B cell (primary cell): ENCODE measurements at regions of chr17 and their contacts with region 1.

Region 1: GRCh38 chr17:27236717-27237315 is 57.1 kb upstream of the WSB1 start:
- DNase-seq: peak; percentile 81
- ATAC-seq: peak; percentile 78
- H3K4me3 ChIP-seq: no peak overlapping the region
- H3K4me3 Mint-ChIP-seq: no peak overlapping the region
- H3K27ac ChIP-seq: no peak overlapping the region
- H3K27ac Mint-ChIP-seq: no peak overlapping the region
- H3K4me1 ChIP-seq: peaks cover 11 to 22% of the 10 kb centered on the region in 2 donors
- H3K4me1 Mint-ChIP-seq: peaks cover 34% of the 10 kb centered on the region
- H3K27me3 ChIP-seq: no peaks in the 10 kb centered on the region
- H3K27me3 Mint-ChIP-seq: no peaks in the 10 kb centered on the region
- CTCF ChIP-seq: peak; percentile 99

Region 2: GRCh38 chr17:27066315-27066714 is 170.5 kb before region 1 on chr17:
- CTCF ChIA-PET with region 1: no interaction called
- POLR2A ChIA-PET with region 1: no interaction called
- intact Hi-C with region 1: no loop called
- DNase-seq: no peak
- ATAC-seq: no peak
- H3K4me3 ChIP-seq: no peak overlapping the region
- H3K4me3 Mint-ChIP-seq: no peak overlapping the region
- H3K27ac ChIP-seq: no peak overlapping the region
- H3K27ac Mint-ChIP-seq: no peak overlapping the region
- H3K4me1 ChIP-seq: no peaks in the 10 kb centered on the region
- H3K4me1 Mint-ChIP-seq: no peaks in the 10 kb centered on the region
- H3K27me3 ChIP-seq: no peaks in the 10 kb centered on the region
- H3K27me3 Mint-ChIP-seq: peaks cover 50% of the 10 kb centered on the region
- CTCF ChIP-seq: no peak

Region 3: GRCh38 chr17:27199948-27200347 is 36.9 kb before region 1 on chr17:
- CTCF ChIA-PET with region 1: interaction called, 53 read pairs
- POLR2A ChIA-PET with region 1: no interaction called
- intact Hi-C with region 1: loop called (anchors 5 kb)
- DNase-seq: no peak
- ATAC-seq: no peak
- H3K4me3 ChIP-seq: no peak overlapping the region
- H3K4me3 Mint-ChIP-seq: no peak overlapping the region
- H3K27ac ChIP-seq: no peak overlapping the region
- H3K27ac Mint-ChIP-seq: no peak overlapping the region
- H3K4me1 ChIP-seq: no peaks in the 10 kb centered on the region
- H3K4me1 Mint-ChIP-seq: peaks cover 2% of the 10 kb centered on the region
- H3K27me3 ChIP-seq: no peaks in the 10 kb centered on the region
- H3K27me3 Mint-ChIP-seq: no peaks in the 10 kb centered on the region
- CTCF ChIP-seq: no peak

Region 4: GRCh38 chr17:27226615-27227230 is 10.1 kb before region 1 on chr17:
- CTCF ChIA-PET with region 1: interaction called, 36 read pairs
- POLR2A ChIA-PET with region 1: no interaction called
- intact Hi-C with region 1: no loop called
- DNase-seq: no peak
- ATAC-seq: no peak
- H3K4me3 ChIP-seq: no peak overlapping the region
- H3K4me3 Mint-ChIP-seq: no peak overlapping the region
- H3K27ac ChIP-seq: no peak overlapping the region
- H3K27ac Mint-ChIP-seq: no peak overlapping the region
- H3K4me1 ChIP-seq: no peaks in the 10 kb centered on the region
- H3K4me1 Mint-ChIP-seq: no peaks in the 10 kb centered on the region
- H3K27me3 ChIP-seq: no peaks in the 10 kb centered on the region
- H3K27me3 Mint-ChIP-seq: no peaks in the 10 kb centered on the region
- CTCF ChIP-seq: no peak

Region 5: GRCh38 chr17:27332485-27333409 is 95.9 kb after region 1 on chr17:
- CTCF ChIA-PET with region 1: interaction called, 140 read pairs
- POLR2A ChIA-PET with region 1: interaction called, 6 read pairs
- intact Hi-C with region 1: loop called (anchors 1 kb)
- DNase-seq: peak; percentile 92
- ATAC-seq: peak; percentile 83
- H3K4me3 ChIP-seq: peak overlapping the region; percentile 23 to 63 (median 55)
- H3K4me3 Mint-ChIP-seq: peak overlapping the region; percentile 85
- H3K27ac ChIP-seq: peak overlapping the region; percentile 38 to 59
- H3K27ac Mint-ChIP-seq: peak overlapping the region; percentile 92
- H3K4me1 ChIP-seq: peaks cover 11 to 13% of the 10 kb centered on the region in 2 donors
- H3K4me1 Mint-ChIP-seq: peaks cover 40% of the 10 kb centered on the region
- H3K27me3 ChIP-seq: no peaks in the 10 kb centered on the region
- H3K27me3 Mint-ChIP-seq: no peaks in the 10 kb centered on the region
- CTCF ChIP-seq: peak; percentile 80

Region 6: DNA sequence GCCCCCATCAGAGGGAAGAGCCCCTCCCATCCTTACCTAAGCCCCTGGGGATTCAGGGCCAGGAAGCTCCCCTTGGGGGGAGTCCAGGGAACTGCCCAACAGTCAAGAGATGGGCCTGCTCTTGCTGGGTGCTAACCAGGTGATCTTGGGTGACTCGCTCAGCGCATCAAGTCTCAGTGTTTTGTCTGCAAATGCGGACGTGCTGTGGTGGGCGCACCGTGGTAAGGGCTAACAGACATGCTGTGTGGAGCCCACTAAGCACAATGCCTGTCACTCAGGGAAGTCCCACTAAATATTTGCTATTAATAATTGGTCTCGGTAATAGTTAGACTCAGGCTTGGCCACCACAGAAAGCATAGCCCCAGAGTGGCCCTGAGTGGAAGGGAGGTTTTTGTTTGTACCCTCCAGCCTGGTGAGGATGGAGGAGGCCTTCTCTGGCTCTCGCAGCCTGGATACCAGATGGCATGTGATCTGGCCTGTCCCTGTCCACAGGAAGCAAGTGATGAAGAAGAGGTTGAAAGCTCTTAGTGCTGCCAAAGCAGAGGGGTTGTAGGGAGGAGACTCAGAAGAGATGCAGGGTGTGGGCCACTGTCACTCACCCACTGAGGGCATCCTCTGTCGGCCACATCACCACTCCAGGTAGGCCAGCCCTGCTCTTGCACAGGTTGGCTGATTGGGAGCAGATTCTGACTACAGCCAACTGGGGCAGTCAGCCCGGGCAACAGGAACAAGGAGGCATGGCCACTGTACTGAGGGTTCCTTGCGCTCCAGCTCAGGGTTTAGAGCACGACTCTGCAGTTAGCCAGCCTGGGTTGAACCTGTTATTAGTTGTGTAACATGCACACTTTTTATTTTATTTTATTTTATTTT is 149.6 kb after region 1 on chr17:
- CTCF ChIA-PET with region 1: interaction called, 52 read pairs
- POLR2A ChIA-PET with region 1: no interaction called
- intact Hi-C with region 1: loop called (anchors 1 kb)
- DNase-seq: no peak
- ATAC-seq: no peak
- H3K4me3 ChIP-seq: no peak overlapping the region
- H3K4me3 Mint-ChIP-seq: no peak overlapping the region
- H3K27ac ChIP-seq: no peak overlapping the region
- H3K27ac Mint-ChIP-seq: no peak overlapping the region
- H3K4me1 ChIP-seq: no peaks in the 10 kb centered on the region
- H3K4me1 Mint-ChIP-seq: peaks cover 4% of the 10 kb centered on the region
- H3K27me3 ChIP-seq: no peaks in the 10 kb centered on the region
- H3K27me3 Mint-ChIP-seq: peaks cover 3% of the 10 kb centered on the region
- CTCF ChIP-seq: no peak

Region 7: DNA sequence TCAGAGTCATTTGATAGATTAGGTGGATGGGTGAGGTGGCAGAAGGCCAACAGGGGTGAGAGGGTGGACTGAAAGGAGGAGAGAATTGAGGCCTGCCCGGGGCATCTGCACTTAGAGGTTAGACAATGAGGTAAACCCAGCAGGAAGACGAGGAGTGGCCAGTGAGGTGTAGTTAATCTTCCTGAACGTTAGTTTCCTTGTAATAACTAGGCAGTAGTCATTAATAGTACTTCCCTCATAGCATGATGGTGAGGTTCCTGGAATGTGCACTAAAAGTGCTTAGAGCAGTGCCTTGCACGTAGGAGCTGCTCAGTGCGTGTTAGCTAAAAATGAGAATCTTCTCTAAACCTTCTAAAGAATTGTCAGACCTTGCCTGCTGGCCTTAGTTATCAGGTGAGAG is 205.9 kb after region 1 on chr17:
- CTCF ChIA-PET with region 1: no interaction called
- POLR2A ChIA-PET with region 1: no interaction called
- intact Hi-C with region 1: no loop called
- DNase-seq: no peak
- ATAC-seq: no peak
- H3K4me3 ChIP-seq: no peak overlapping the region
- H3K4me3 Mint-ChIP-seq: no peak overlapping the region
- H3K27ac ChIP-seq: no peak overlapping the region
- H3K27ac Mint-ChIP-seq: no peak overlapping the region
- H3K4me1 ChIP-seq: no peaks in the 10 kb centered on the region
- H3K4me1 Mint-ChIP-seq: no peaks in the 10 kb centered on the region
- H3K27me3 ChIP-seq: no peaks in the 10 kb centered on the region
- H3K27me3 Mint-ChIP-seq: peaks cover 9% of the 10 kb centered on the region
- CTCF ChIP-seq: no peak

Region 8: GRCh38 chr17:27654654-27655524 is 418.1 kb after region 1 on chr17:
- CTCF ChIA-PET with region 1: interaction called, 12 read pairs
- POLR2A ChIA-PET with region 1: no interaction called
- intact Hi-C with region 1: loop called (anchors 1 kb)
- DNase-seq: peak; percentile 79
- ATAC-seq: peak; percentile 88
- H3K4me3 ChIP-seq: no peak overlapping the region
- H3K4me3 Mint-ChIP-seq: no peak overlapping the region
- H3K27ac ChIP-seq: no peak overlapping the region
- H3K27ac Mint-ChIP-seq: no peak overlapping the region
- H3K4me1 ChIP-seq: peaks cover 3 to 5% of the 10 kb centered on the region in 2 donors
- H3K4me1 Mint-ChIP-seq: peaks cover 6% of the 10 kb centered on the region
- H3K27me3 ChIP-seq: no peaks in the 10 kb centered on the region
- H3K27me3 Mint-ChIP-seq: no peaks in the 10 kb centered on the region
- CTCF ChIP-seq: peak; percentile 96